ENCODE measurements at regions of chr6 and their contacts with region 1.

Region 1: DNA sequence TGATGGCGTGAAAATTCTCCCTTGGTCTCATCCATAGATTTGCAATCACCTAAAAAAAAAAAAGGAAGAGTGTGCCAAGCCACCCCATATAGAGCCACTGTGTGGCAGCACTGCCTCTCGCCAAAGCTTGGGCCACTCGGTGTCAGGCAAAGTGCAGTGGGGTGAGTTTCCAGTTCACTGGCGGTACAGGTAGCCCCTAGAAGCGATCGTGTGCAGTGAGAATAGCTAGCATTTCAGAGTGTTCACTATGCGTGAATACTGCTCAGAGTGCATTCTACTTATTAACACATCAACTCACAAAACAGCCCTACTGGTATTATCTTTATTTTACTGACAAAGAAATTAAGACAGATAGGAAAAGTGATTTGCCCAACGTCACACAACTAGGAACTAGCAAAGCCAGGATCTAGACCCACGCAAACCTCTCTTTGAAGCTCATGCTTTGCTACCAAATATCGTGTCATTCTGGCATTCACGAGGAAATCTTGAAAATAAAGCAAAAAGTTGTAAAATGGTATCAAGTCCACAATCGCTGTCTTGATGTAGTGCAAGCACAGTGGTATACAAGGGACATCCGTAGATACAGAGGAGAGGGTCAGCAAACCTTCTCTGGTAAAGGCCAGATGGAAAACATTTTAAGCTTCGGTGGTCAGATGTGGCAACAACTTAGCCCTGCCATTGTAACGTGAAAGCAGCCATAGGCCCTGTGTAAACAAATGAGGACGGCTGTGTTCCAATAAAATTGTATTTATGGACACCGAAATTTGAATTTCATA is 10.4 kb upstream of the GCNT2 start:
- DNase-seq: peak; percentile 73 to 77 (median 77)
- ATAC-seq: peak; percentile 91
- H3K4me3 ChIP-seq: no peak overlapping the region
- H3K27ac ChIP-seq: peak overlapping the region in 3 of 4 donors; percentile 4 to 60 (median 51)
- H3K4me1 ChIP-seq: peaks cover 35% of the 10 kb centered on the region
- H3K27me3 ChIP-seq: no peaks in the 10 kb centered on the region
- CTCF ChIP-seq: peak; percentile 35 to 87 (median 73)
- POLR2A ChIP-seq: no peak

Region 2: DNA sequence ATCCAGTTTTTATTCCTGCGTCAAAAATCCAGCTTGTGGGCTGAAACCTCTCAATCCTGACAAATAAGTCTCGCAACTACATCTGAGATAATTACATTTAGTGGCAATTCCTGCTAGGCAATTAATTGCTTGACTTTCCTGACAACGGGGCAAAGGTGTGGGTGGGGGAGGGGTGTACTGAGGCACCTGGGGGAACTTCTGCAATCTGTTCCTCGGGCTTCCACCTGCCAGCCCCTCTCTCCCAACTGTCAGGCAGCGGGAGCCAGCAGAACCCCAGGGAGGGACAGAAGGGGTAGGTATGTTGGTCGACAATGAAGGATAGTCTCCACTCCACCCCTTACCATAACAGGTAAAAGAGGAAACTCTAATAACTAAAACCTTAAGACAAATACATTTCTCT is 176.8 kb after region 1 on chr6:
- intact Hi-C with region 1: loop called (anchors 10 kb)
- DNase-seq: no peak
- ATAC-seq: no peak
- H3K4me3 ChIP-seq: no peak overlapping the region
- H3K27ac ChIP-seq: no peak overlapping the region
- H3K4me1 ChIP-seq: no peaks in the 10 kb centered on the region
- H3K27me3 ChIP-seq: no peaks in the 10 kb centered on the region
- CTCF ChIP-seq: no peak
- POLR2A ChIP-seq: no peak

Measured in body of pancreas (tissue), 4 donors.